ENCODE measurements at regions of chr7 and their contacts with region 1.

Region 1: GRCh38 chr7:45863715-45864114 is 9.2 kb downstream of the CCDC201 start:
- DNase-seq: peak in 2 of 4 experiments; percentile 14 to 22
- ATAC-seq: peak; percentile 87
- H3K4me3 ChIP-seq: no peak overlapping the region
- H3K27ac ChIP-seq: no peak overlapping the region
- H3K4me1 ChIP-seq: no peaks in the 10 kb centered on the region
- H3K27me3 ChIP-seq: peaks cover 0 to 35% of the 10 kb centered on the region in 2 experiments; a peak in 2 of 5 replicates
- CTCF ChIP-seq: peak; percentile 53 to 96 (median 59)
- EP300 ChIP-seq: no peak
- POLR2A ChIP-seq: no peak
- RAD21 ChIP-seq: peak in 1 of 2 experiments; percentile 21; a peak in 1 of 4 replicates

Region 2: DNA sequence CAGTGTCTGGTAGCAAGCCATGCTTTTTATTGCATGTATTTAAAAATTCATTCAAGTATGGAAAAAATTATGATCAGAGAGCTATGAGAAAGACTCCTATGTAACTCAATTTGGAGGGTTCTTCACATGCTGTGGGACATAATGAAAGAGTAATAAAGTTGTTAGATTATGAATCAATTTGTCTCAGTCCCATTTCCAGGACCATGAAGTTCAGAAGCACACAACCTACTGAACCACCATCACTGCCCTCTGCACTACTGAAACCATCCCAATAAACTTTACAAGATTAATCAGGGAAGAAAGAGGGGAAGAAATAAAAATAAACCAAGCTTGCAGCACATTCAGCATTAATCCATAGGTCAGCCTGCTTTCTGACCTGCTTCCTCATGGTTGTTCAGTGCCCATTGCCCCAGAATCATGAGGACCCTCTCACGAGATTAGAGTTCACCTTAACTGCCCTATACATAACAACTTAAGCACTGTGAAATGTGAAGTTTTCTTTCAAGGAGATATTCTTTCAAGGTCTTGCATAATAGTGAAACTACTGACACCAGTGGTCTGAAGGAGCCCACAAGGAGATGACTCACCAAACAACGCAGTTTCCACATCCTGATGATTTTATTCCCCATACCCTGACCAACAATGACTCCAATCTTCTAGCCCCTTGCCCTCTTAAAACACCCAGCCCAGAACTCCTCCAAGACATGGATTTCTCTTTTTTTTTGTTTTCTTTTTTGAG is 461.1 kb before region 1 on chr7:
- CTCF ChIA-PET with region 1: no interaction called
- POLR2A ChIA-PET with region 1: no interaction called
- in situ Hi-C with region 1: no loop called
- intact Hi-C with region 1: loop called (anchors 10 kb)
- DNase-seq: no peak
- ATAC-seq: no peak
- H3K4me3 ChIP-seq: no peak overlapping the region
- H3K27ac ChIP-seq: no peak overlapping the region
- H3K4me1 ChIP-seq: no peaks in the 10 kb centered on the region; a peak in 1 of 5 replicates
- H3K27me3 ChIP-seq: peaks cover 0 to 9% of the 10 kb centered on the region in 2 experiments; a peak in 2 of 5 replicates
- CTCF ChIP-seq: no peak
- EP300 ChIP-seq: no peak
- POLR2A ChIP-seq: no peak
- RAD21 ChIP-seq: no peak

Region 3: DNA sequence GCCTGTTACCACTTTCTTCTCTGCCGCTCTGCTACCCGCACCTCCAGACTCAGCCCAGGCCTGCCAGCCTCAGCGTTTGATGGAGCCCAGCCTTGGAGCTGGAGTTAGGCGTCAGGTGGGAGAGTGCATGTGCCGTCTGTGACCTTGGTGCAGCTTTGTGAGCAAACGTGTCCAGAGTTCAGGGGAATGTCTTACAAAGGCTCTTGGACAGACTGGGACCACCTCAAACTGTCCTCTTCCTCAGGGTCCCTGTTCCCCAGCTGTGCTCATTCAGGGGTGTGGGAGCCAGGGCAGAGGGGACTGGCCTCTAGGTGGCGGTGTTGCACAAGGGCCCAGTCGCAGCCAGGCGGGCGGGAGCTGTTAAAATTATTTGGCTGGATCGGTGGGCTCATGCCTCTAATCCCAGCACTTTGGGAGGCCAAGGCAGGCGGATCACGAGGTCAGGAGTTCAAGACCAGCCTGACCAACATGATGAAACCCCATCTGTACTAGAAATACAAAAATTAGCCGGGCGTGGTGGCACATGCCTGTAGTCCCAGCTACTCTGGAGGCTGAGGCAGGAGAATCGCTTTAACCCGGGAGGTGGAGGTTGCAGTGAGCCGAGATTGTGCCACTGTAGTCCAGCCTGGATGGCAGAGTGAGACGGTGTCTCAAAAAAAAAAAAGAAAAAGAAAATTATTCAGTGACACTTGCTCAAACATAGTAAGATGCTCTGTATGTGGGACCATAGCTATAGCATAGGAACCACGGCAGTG is 200.4 kb before region 1 on chr7:
- CTCF ChIA-PET with region 1: no interaction called
- POLR2A ChIA-PET with region 1: no interaction called
- in situ Hi-C with region 1: loop called (anchors 5 kb)
- intact Hi-C with region 1: no loop called
- DNase-seq: peak; percentile 60 to 76 (median 72)
- ATAC-seq: peak; percentile 98
- H3K4me3 ChIP-seq: no peak overlapping the region
- H3K27ac ChIP-seq: no peak overlapping the region
- H3K4me1 ChIP-seq: no peaks in the 10 kb centered on the region
- H3K27me3 ChIP-seq: peaks cover 0 to 24% of the 10 kb centered on the region in 2 experiments; a peak in 2 of 5 replicates
- CTCF ChIP-seq: peak; percentile 86 to 89 (median 88)
- EP300 ChIP-seq: no peak
- POLR2A ChIP-seq: no peak
- RAD21 ChIP-seq: peak; percentile 80 to 86

Measured in K562 (cell line).